ENCODE measurements at regions of chr7 and their contacts with region 1.

Region 1: DNA sequence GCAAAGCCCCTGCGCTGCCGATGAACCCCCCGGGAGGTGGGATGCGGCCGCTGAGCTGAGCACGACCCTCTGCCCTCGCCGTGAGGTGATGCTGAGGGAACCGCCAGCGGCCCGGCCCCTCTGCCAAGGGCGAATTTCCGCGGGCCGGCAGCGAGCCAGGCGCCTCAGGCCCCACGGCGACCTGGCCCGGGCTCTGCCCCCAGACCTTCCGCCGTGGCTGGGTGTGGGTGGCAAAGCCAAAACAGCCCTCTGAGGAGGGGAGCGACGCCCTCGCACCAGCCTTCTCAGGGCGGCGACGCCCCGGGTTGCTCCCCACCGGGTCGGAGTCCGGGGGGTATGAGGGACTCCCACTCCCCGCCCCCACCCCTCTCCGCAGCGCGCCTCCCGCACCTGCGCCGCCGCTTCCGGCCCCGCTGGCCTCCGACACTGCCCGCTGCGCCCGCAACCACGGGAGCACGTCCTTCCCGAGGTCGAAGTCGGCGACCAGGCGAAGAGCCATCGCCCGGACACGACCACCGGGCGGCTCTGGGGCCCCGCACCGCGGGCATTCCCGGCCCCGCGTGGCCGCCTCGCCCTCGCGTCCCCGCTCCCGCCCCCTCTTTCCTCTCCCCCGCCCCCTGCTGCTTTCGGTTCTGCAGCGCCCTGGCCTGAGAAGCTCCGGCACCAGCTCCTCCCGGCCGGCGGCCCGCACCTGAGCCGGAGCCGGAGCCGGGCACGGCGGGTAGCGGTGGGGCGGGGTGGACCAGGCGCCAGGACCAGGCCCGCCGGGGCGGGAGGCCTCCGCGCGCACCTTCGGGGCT is at the start of gene GSAP:
- DNase-seq: no peak
- ATAC-seq: peak; percentile 71
- H3K4me3 ChIP-seq: peak within 1 kb of the TSS; percentile 74
- H3K27ac ChIP-seq: peak within 1 kb of the TSS; percentile 75
- H3K4me1 ChIP-seq: peaks cover 4% of the 10 kb centered on the region; the same call in 1 of the 2 replicates
- H3K27me3 ChIP-seq: no peaks in the 10 kb centered on the region
- CTCF ChIP-seq: no peak
- EP300 ChIP-seq: no peak
- POLR2A ChIP-seq: peak; percentile 84
- RAD21 ChIP-seq: no peak
- polyA plus RNA-seq, gene GSAP: 6.6 to 8.0 TPM

Region 2: DNA sequence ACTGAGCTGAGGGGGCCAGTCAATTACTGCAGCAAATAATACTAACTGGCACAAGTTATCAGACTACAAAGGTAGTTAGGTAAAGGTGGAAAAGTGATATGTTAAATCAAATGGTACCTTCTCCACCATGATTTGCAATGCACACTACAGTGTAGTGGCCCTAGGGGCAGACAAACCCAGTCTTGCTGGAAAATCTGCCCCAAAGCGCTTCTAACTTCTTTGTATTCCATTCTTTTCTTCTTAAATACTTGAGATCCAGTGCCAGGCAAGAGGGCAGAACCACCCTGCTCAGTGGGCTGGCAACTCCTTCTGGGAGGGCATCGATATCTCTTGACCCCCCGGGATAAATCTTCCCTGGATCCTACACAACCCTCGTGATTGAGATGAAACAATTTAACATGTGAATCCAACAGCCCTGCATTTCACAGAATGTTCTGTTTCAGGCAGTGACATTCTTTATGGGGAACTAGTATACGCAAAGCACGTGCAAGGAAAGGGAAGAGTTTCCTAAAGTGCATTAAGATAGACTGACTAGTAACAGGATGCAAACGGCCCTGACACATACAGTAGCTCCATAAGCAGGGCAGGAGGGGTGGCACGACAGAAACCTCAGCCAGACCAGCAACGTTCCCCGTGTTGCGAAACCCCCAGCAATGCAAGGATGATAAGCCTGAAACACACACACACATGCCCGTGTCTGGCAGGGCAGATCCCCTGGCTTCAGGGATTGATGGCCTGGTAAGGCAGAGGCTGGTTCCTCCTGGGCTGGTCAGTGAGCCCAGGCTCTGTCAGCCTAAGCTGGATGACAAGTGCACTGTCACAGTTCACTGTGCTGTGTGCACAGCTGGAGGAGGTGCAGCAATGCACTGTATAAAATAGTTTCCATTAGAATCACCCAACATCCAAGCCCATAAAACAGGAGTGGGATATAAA is 89.1 kb before region 1 on chr7:
- CTCF ChIA-PET with region 1: interaction called, 7 read pairs
- POLR2A ChIA-PET with region 1: interaction called, 5 read pairs
- RAD21 ChIA-PET with region 1: interaction called, 23 read pairs
- SMC1A ChIA-PET with region 1: interaction called, 13 read pairs
- in situ Hi-C with region 1: no loop called
- intact Hi-C with region 1: no loop called
- DNase-seq: no peak
- ATAC-seq: no peak
- H3K4me3 ChIP-seq: no peak overlapping the region
- H3K27ac ChIP-seq: no peak overlapping the region
- H3K4me1 ChIP-seq: peaks cover 42% of the 10 kb centered on the region
- H3K27me3 ChIP-seq: no peaks in the 10 kb centered on the region
- CTCF ChIP-seq: no peak
- EP300 ChIP-seq: no peak
- POLR2A ChIP-seq: no peak
- RAD21 ChIP-seq: no peak

Region 3: GRCh38 chr7:77351539-77352004 is 64.5 kb before region 1 on chr7:
- CTCF ChIA-PET with region 1: interaction called, 6 read pairs
- POLR2A ChIA-PET with region 1: interaction called, 3 read pairs
- RAD21 ChIA-PET with region 1: interaction called, 13 read pairs
- SMC1A ChIA-PET with region 1: interaction called, 13 read pairs
- in situ Hi-C with region 1: no loop called
- intact Hi-C with region 1: loop called (anchors 1 kb)
- DNase-seq: peak; percentile 98
- ATAC-seq: peak; percentile 94
- H3K4me3 ChIP-seq: no peak overlapping the region
- H3K27ac ChIP-seq: peak overlapping the region; percentile 61
- H3K4me1 ChIP-seq: peaks cover 23% of the 10 kb centered on the region
- H3K27me3 ChIP-seq: no peaks in the 10 kb centered on the region
- CTCF ChIP-seq: no peak
- EP300 ChIP-seq: peak; percentile 91 to 92; a peak in 3 of 4 replicates
- POLR2A ChIP-seq: peak; percentile 56; the same call in 1 of the 2 replicates
- RAD21 ChIP-seq: 0 out of 2 replicates have a peak, but pooled peaks have one; percentile 1

Region 4: DNA sequence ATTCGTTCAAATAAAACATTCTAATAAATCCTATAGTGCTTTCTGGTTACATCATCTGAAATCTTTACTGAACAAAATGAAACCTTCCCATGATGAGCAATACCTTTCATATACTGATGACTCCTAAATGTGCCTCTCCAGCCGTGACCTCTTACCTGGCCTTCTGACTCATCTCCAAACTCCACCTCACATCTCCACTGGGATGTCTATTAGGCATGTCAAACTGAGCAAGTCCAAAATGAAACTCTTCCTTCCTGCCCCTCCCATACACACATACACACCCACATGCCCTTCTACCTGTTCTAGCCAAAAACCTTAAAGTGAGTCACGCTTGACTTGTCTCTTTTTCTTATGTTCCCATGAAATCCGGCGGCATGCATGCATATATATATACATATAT is 22.8 kb before region 1 on chr7:
- CTCF ChIA-PET with region 1: interaction called, 5 read pairs
- POLR2A ChIA-PET with region 1: interaction called, 4 read pairs
- RAD21 ChIA-PET with region 1: interaction called, 12 read pairs
- SMC1A ChIA-PET with region 1: interaction called, 34 read pairs
- in situ Hi-C with region 1: no loop called
- intact Hi-C with region 1: loop called (anchors 2 kb)
- DNase-seq: peak; percentile 85
- ATAC-seq: peak; percentile 92
- H3K4me3 ChIP-seq: no peak overlapping the region
- H3K27ac ChIP-seq: peak overlapping the region; percentile 72
- H3K4me1 ChIP-seq: peaks cover 30% of the 10 kb centered on the region
- H3K27me3 ChIP-seq: no peaks in the 10 kb centered on the region
- CTCF ChIP-seq: no peak
- EP300 ChIP-seq: peak in 1 of 2 experiments; percentile 70; a peak in 2 of 4 replicates
- POLR2A ChIP-seq: no peak
- RAD21 ChIP-seq: 0 out of 2 replicates have a peak, but pooled peaks have one; percentile 3

Region 5: DNA sequence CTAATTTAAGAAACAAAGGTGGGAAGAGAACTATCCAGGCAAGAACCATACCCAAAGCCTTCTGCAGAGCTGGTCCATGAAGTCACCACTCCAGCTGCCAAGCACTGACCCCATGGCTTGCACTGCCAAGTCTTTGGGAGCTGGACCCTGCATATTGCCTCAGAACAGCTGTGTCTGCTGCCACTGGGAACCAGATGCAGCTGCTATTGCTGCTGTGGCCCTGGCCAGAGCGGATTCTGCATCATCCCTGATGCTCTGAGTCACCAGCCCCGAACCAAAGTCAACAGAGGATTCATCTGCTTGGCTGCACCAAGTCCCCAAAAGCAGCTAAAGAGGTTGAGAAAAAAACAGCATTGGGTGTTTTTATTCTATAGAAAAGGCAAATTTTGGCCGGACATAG is 39.3 kb after region 1 on chr7:
- CTCF ChIA-PET with region 1: interaction called, 4 read pairs
- POLR2A ChIA-PET with region 1: interaction called, 4 read pairs
- RAD21 ChIA-PET with region 1: no interaction called
- SMC1A ChIA-PET with region 1: interaction called, 16 read pairs
- in situ Hi-C with region 1: no loop called
- intact Hi-C with region 1: loop called (anchors 5 kb)
- DNase-seq: no peak
- ATAC-seq: no peak
- H3K4me3 ChIP-seq: no peak overlapping the region
- H3K27ac ChIP-seq: no peak overlapping the region
- H3K4me1 ChIP-seq: 0 out of 2 replicates have a peak, but pooled peaks cover 3% of the 10 kb centered on the region
- H3K27me3 ChIP-seq: no peaks in the 10 kb centered on the region
- CTCF ChIP-seq: no peak
- EP300 ChIP-seq: no peak
- POLR2A ChIP-seq: no peak
- RAD21 ChIP-seq: no peak

Region 6: DNA sequence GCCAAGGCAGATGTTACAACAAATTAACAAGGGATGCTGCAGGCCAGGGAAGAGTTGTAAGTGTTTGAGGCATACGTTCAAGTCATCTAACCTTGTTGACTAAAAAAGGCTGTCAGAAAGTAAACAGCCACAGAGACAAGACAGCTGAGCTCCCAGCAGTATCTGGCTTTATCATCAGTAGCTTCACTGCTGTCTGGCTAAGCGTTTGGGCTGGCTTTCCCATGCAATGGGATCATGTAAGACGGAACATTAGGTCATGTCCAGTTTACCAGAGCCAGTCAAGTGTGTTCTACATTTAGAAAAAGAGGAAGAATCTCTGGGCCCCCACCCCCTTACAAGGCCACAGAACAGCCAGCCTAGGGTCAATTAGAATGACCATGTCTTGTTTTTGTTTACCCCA is 51.4 kb after region 1 on chr7:
- CTCF ChIA-PET with region 1: no interaction called
- POLR2A ChIA-PET with region 1: interaction called, 5 read pairs
- RAD21 ChIA-PET with region 1: interaction called, 10 read pairs
- SMC1A ChIA-PET with region 1: interaction called, 11 read pairs
- in situ Hi-C with region 1: no loop called
- intact Hi-C with region 1: loop called (anchors 5 kb)
- DNase-seq: no peak
- ATAC-seq: peak; percentile 4; the same call in 1 of the 3 replicates
- H3K4me3 ChIP-seq: no peak overlapping the region
- H3K27ac ChIP-seq: no peak overlapping the region
- H3K4me1 ChIP-seq: peaks cover 19% of the 10 kb centered on the region
- H3K27me3 ChIP-seq: no peaks in the 10 kb centered on the region
- CTCF ChIP-seq: no peak
- EP300 ChIP-seq: no peak
- POLR2A ChIP-seq: no peak
- RAD21 ChIP-seq: no peak

Region 7: GRCh38 chr7:77542409-77542808 is 126.4 kb after region 1 on chr7:
- CTCF ChIA-PET with region 1: interaction called, 4 read pairs
- POLR2A ChIA-PET with region 1: interaction called, 14 read pairs
- RAD21 ChIA-PET with region 1: interaction called, 29 read pairs
- SMC1A ChIA-PET with region 1: interaction called, 8 read pairs
- in situ Hi-C with region 1: no loop called
- intact Hi-C with region 1: loop called (anchors 2 kb)
- DNase-seq: no peak
- ATAC-seq: peak; percentile 2; the same call in 1 of the 3 replicates
- H3K4me3 ChIP-seq: no peak overlapping the region
- H3K27ac ChIP-seq: no peak overlapping the region
- H3K4me1 ChIP-seq: peaks cover 12% of the 10 kb centered on the region
- H3K27me3 ChIP-seq: no peaks in the 10 kb centered on the region
- CTCF ChIP-seq: no peak
- EP300 ChIP-seq: no peak
- POLR2A ChIP-seq: no peak
- RAD21 ChIP-seq: no peak